ENCODE measurements at regions of chr17 and their contacts with region 1.

Region 1: GRCh38 chr17:16363749-16364536 is 10.7 kb upstream of the CENPV start:
- DNase-seq: peak; percentile 87
- H3K4me3 ChIP-seq: no peak overlapping the region
- H3K27ac ChIP-seq: no peak overlapping the region
- H3K4me1 ChIP-seq: peaks cover 3% of the 10 kb centered on the region
- CTCF ChIP-seq: peak; percentile 99

Region 2: DNA sequence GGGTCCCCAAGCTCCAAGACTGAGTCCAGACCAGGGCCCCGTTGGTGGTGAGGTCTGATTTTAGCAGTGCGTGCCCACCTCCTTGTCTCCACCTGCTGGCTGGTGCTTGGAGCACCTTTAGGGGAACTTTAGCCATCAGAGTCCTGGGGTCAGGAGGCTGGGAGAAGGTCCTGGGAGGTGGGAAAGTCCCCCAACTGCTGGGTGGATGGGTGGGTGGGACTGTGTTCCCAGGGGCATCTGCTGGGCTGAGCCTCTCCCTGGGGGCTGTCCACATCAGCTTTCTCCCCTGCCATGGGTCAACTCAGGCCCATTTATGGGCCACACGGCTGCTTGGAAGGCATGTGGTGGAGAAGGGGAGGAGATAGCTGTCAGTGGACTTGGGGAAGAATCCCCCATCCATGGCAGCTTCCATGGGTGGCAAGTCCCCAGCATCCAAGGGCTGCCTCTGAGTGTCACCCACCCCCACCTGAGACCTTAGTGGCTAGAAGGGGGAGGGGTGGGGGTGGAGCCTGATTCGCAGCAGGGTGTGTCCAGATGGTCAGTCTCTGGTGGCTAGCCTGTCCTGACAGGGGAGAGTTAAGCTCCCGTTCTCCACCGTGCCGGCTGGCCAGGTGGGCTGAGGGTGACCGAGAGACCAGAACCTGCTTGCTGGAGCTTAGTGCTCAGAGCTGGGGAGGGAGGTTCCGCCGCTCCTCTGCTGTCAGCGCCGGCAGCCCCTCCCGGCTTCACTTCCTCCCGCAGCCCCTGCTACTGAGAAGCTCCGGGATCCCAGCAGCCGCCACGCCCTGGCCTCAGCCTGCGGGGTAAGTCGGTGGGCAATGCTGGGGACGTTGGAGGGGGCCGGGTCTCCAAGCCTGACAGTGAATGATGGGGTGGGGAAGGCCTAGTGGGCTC is 51.3 kb after region 1 on chr17 and contains the start of gene TRPV2:
- CTCF ChIA-PET with region 1: interaction called, 9 read pairs
- POLR2A ChIA-PET with region 1: no interaction called
- intact Hi-C with region 1: loop called (anchors 1 kb)
- DNase-seq: peak; percentile 80
- H3K4me3 ChIP-seq: peak within 1 kb of the TSS; percentile 71
- H3K27ac ChIP-seq: peak within 1 kb of the TSS; percentile 5
- H3K4me1 ChIP-seq: peaks cover 35% of the 10 kb centered on the region
- CTCF ChIP-seq: peak; percentile 85
- total RNA-seq, gene TRPV2: 10.5 and 15.4 TPM in 2 replicates

Region 3: DNA sequence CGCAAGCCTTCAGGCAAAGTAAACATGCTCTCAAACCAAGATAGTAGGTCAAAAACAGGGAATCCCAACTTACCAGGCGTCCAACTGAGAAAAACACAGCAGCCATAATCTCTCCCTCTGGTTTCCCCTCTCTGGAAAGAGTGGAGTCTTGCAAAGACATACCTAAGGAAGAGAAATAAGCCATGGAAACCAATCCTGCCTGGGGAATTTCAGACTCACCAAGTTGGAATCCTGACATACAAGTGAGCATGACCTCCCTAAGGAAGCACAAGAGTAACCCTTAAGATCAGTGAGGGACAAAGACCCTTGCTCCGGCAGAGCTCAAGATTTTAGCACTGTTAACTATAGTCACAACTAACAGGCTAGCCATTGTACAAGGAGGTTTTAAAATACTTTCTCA is 285.6 kb after region 1 on chr17:
- CTCF ChIA-PET with region 1: no interaction called
- POLR2A ChIA-PET with region 1: no interaction called
- intact Hi-C with region 1: no loop called
- DNase-seq: no peak
- H3K4me3 ChIP-seq: no peak overlapping the region
- H3K27ac ChIP-seq: no peak overlapping the region
- H3K4me1 ChIP-seq: peaks cover 6% of the 10 kb centered on the region
- CTCF ChIP-seq: no peak

Measured in OCI-LY7 (cell line).